Mammary epithelial cell (primary cell): ENCODE measurements at regions of chr4 and their contacts with region 1.

Region 1: DNA sequence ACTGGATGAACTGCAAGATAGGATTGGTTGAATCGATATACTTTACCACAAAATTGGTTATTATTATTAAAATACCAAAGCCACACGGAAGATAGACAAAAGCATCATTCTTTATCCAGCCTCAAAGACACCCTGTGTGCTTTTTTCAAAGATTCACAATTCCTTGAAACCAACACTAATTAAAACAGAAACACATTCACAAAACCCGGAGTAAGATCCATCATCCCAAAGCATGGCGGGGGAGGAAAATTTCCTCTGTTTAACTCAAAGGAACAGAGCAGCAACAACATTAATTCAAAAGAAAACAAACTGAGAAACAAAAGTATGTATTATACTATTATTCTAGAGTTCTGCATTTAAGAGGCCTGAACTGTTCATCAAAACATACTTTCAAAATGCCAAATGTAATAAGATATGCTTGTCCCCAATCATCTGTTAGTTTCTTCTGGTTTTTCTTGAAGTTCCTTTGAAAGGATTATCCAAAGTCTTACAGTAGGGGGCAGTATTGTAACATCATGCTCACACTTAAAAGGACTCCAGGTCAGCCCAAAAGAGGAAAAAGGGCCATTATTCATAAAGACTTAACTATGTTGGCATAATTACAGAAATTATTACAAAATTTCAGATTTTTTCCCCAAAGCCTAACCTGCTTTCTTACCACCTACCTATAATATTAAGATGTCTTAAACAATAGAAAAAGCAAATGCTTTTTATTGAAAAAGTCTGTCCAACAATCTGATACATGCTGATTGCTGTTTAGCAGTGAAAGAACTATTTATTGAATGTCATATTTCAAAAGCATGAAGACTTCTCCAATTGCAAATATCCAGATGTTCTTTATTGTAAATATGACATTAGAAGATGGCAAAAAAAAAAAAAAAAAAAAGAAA is 168.7 kb downstream of the SCFD2 start:
- DNase-seq: peak; percentile 47
- H3K4me3 ChIP-seq: no peak overlapping the region
- H3K27ac ChIP-seq: no peak overlapping the region
- H3K4me1 ChIP-seq: no peaks in the 10 kb centered on the region
- H3K27me3 ChIP-seq: no peaks in the 10 kb centered on the region
- CTCF ChIP-seq: peak; percentile 48 to 75

Region 2: DNA sequence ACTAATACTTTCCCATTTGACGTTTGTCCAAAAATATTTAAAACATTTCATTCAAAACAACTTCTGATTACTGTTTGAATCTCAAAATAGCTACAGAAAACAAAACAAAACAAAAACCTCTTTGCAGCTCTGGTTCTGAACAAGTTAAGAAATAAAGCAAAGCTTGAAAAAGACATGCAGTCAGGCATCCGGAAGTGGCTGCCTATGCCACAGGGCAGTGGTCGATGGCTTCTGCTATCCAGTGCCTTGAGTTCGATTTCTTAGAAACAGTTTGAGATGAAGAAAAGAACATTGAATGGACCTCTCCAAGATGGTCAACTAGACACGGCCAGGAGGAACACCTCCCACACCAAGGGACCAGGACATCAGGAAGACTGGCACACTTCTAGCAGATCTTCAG is 43.4 kb after region 1 on chr4:
- CTCF ChIA-PET with region 1: no interaction called
- dilution Hi-C with region 1: no loop called
- in situ Hi-C with region 1: no loop called
- intact Hi-C with region 1: no loop called
- DNase-seq: no peak
- H3K4me3 ChIP-seq: no peak overlapping the region
- H3K27ac ChIP-seq: no peak overlapping the region
- H3K4me1 ChIP-seq: no peaks in the 10 kb centered on the region
- H3K27me3 ChIP-seq: no peaks in the 10 kb centered on the region
- CTCF ChIP-seq: no peak

Region 3: GRCh38 chr4:53377319-53378170 is 180.4 kb after region 1 on chr4 and contains the start of gene FIP1L1:
- CTCF ChIA-PET with region 1: no interaction called
- dilution Hi-C with region 1: no loop called
- in situ Hi-C with region 1: loop called in 1 of 2 experiments (anchors 25 kb)
- intact Hi-C with region 1: loop called (anchors 2 kb)
- DNase-seq: peak; percentile 85
- H3K4me3 ChIP-seq: peak within 1 kb of the TSS; percentile 71 to 93 (median 88)
- H3K27ac ChIP-seq: peak within 1 kb of the TSS; percentile 70
- H3K4me1 ChIP-seq: no peaks in the 10 kb centered on the region
- H3K27me3 ChIP-seq: no peaks in the 10 kb centered on the region
- CTCF ChIP-seq: peak in 1 of 2 donors; percentile 3
- total RNA-seq, gene FIP1L1: 42.3 to 70.8 TPM

Region 4: GRCh38 chr4:53601251-53601764 is 404.2 kb after region 1 on chr4:
- CTCF ChIA-PET with region 1: no interaction called
- dilution Hi-C with region 1: no loop called
- in situ Hi-C with region 1: no loop called
- intact Hi-C with region 1: loop called (anchors 5 kb)
- DNase-seq: no peak
- H3K4me3 ChIP-seq: no peak overlapping the region
- H3K27ac ChIP-seq: no peak overlapping the region
- H3K4me1 ChIP-seq: no peaks in the 10 kb centered on the region
- H3K27me3 ChIP-seq: no peaks in the 10 kb centered on the region
- CTCF ChIP-seq: peak; percentile 39 to 61

Region 5: DNA sequence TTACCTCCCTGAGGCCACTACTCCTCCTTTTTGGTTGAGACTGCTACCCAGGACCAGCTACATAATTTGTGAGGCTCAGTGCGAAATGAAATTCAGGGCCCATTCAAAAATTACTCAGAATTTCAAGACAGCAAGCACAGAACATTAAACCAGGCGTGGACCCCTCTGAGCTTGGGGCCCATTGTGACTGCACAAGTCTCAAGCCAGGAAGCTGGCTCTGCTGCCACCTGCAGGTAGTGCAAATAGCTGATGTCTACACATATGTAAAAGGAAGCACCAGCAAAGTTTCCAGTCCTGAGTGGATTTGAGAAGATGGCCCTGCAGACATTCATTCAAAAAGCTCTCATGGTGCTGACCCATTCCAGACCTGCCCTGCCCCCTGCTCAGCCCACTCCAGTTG is 607.6 kb after region 1 on chr4:
- CTCF ChIA-PET with region 1: no interaction called
- dilution Hi-C with region 1: no loop called
- in situ Hi-C with region 1: loop called in 1 of 2 experiments (anchors 25 kb)
- intact Hi-C with region 1: loop called (anchors 2 kb)
- DNase-seq: peak; percentile 17
- H3K4me3 ChIP-seq: no peak overlapping the region
- H3K27ac ChIP-seq: no peak overlapping the region
- H3K4me1 ChIP-seq: no peaks in the 10 kb centered on the region
- H3K27me3 ChIP-seq: no peaks in the 10 kb centered on the region
- CTCF ChIP-seq: peak; percentile 81 to 83

Region 6: DNA sequence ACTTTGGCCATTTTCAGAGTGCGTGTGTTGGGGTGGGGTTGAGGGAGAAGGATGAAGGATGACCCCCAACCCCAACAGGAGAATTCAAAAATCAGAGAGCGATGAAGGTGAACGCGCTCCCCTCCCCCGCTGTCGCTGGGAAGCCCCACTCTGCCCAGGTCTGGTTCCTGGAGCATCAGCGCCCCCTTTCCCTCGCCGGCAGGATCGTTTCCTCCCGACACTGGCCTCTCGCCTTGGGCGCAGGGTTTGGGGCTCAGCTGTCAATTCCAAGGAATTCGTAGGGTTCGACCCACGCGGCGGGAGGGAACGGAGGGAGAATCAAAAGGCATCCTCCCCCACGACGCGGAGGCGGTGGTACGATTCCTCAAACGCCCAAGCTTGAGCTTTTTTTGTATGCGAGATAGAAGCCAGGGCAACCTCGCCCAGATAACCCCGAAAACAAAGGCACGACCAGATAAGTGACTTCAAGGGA is 1031.0 kb after region 1 on chr4:
- CTCF ChIA-PET with region 1: no interaction called
- dilution Hi-C with region 1: no loop called
- in situ Hi-C with region 1: loop called (anchors 5 to 10 kb)
- intact Hi-C with region 1: loop called (anchors 1 kb)
- DNase-seq: peak; percentile 65
- H3K4me3 ChIP-seq: peak overlapping the region; percentile 39 to 66 (median 53)
- H3K27ac ChIP-seq: no peak overlapping the region
- H3K4me1 ChIP-seq: peaks cover 24% of the 10 kb centered on the region
- H3K27me3 ChIP-seq: peaks cover 24% of the 10 kb centered on the region
- CTCF ChIP-seq: peak; percentile 88 to 95

Region 7: DNA sequence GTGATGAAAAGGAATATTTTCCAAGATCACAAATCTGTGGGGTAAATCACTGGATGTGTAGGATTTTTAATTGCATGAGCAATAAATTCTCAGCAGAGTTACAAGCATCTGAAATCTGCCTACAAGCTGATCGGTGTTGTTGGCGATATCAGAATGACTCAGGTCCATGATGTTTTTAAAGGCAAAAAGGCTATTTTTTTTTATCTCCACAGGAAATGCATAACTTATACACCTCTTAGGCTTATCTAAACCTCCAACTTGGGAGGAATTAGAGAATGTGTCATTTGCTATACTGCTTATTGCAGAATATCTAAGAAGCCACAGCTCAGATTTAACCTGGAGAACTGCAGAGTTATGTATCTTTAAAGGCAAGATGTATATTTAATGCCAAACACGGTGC is 1522.3 kb after region 1 on chr4:
- CTCF ChIA-PET with region 1: no interaction called
- dilution Hi-C with region 1: no loop called
- in situ Hi-C with region 1: no loop called
- intact Hi-C with region 1: no loop called
- DNase-seq: no peak
- H3K4me3 ChIP-seq: no peak overlapping the region
- H3K27ac ChIP-seq: no peak overlapping the region
- H3K4me1 ChIP-seq: no peaks in the 10 kb centered on the region
- H3K27me3 ChIP-seq: no peaks in the 10 kb centered on the region
- CTCF ChIP-seq: no peak